MCF 10A (cell line): ENCODE measurements at regions of chr21 and their contacts with region 1.

Region 1: GRCh38 chr21:17688912-17689874 is 76.5 kb upstream of the BTG3 start:
- DNase-seq: peak; percentile 95
- H3K4me3 Mint-ChIP-seq: peak overlapping the region; percentile 64
- H3K27ac Mint-ChIP-seq: peak overlapping the region; percentile 97
- H3K4me1 Mint-ChIP-seq: peaks cover 30% of the 10 kb centered on the region
- H3K27me3 Mint-ChIP-seq: no peaks in the 10 kb centered on the region
- CTCF ChIP-seq: peak; percentile 33

Region 2: DNA sequence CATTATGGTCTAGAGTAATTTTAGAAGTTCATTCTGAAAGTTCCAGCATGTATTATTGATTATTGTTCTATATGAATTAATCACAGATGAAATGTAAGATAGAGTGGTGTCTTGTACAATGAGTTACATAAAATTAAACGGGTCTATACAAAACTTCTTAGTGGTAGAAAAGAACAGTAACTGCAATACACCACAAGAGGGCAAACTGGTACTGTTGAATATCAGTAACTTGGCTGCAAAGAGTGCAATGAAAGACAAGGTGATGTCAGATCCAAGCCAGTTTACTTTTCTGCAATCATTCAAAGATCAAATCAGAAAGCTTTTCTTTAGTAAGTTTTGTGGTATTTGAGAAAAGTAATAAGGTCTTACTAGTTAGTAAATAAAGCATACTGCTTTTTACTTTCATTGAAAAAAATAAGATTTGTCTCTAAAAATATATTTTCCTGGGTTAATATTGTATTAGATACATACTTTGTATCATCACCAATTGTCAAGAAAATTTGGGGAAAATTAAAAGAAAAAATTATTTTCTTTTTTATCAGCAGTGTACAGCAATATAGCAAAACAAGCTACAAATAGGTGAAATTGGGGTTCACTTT is 10.1 kb before region 1 on chr21:
- CTCF ChIA-PET with region 1: interaction called, 39 read pairs
- POLR2A ChIA-PET with region 1: interaction called, 6 read pairs
- intact Hi-C with region 1: no loop called
- DNase-seq: peak; percentile 73
- H3K4me3 Mint-ChIP-seq: no peak overlapping the region
- H3K27ac Mint-ChIP-seq: no peak overlapping the region
- H3K4me1 Mint-ChIP-seq: no peaks in the 10 kb centered on the region
- H3K27me3 Mint-ChIP-seq: no peaks in the 10 kb centered on the region
- CTCF ChIP-seq: peak; percentile 80

Region 3: GRCh38 chr21:17708522-17709265 is 19.5 kb after region 1 on chr21:
- CTCF ChIA-PET with region 1: interaction called, 31 read pairs
- POLR2A ChIA-PET with region 1: interaction called, 90 read pairs
- intact Hi-C with region 1: no loop called
- DNase-seq: no peak
- H3K4me3 Mint-ChIP-seq: no peak overlapping the region
- H3K27ac Mint-ChIP-seq: peak overlapping the region; percentile 99
- H3K4me1 Mint-ChIP-seq: peaks cover 35% of the 10 kb centered on the region
- H3K27me3 Mint-ChIP-seq: no peaks in the 10 kb centered on the region
- CTCF ChIP-seq: no peak

Region 4: GRCh38 chr21:17741806-17742550 is 52.8 kb after region 1 on chr21:
- CTCF ChIA-PET with region 1: no interaction called
- POLR2A ChIA-PET with region 1: no interaction called
- intact Hi-C with region 1: no loop called
- DNase-seq: no peak
- H3K4me3 Mint-ChIP-seq: no peak overlapping the region
- H3K27ac Mint-ChIP-seq: no peak overlapping the region
- H3K4me1 Mint-ChIP-seq: no peaks in the 10 kb centered on the region
- H3K27me3 Mint-ChIP-seq: no peaks in the 10 kb centered on the region
- CTCF ChIP-seq: no peak

Region 5: DNA sequence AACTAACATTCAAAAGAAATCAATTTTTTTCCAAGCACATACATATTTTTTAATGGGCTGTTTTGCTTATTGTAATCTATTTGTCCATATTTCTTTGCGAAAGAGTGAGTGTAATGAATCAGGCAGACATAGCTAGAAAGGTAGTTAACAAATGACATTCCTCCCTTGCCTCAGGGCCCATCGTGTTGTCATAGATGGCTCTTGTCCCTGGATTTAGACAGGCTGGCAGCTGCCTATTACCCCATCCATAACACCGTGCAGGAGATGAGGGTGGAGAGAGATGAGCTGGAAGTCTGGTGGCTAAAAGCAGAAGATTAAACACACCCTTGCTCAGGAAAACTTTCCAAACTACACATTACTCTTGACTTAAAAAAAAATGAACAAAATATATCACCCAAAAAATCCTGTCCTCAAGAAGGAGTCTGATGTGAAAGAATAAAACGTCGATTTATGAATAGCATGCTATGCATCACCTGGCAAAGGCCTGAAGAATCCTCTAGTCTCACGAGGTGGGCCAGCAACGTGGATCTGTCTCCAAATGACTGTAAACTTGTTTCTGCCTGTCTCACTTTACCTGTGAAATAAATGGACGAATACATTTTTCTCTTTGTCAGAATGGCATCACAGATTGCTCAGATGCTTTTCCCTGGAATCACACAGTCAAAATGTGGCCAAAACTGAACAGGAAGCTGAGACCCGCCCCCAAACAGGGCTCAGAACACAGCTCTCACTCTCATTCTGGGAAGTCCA is 74.3 kb after region 1 on chr21:
- CTCF ChIA-PET with region 1: interaction called, 3 read pairs
- POLR2A ChIA-PET with region 1: interaction called, 30 read pairs
- intact Hi-C with region 1: no loop called
- DNase-seq: peak; percentile 54
- H3K4me3 Mint-ChIP-seq: no peak overlapping the region
- H3K27ac Mint-ChIP-seq: peak overlapping the region; percentile 64
- H3K4me1 Mint-ChIP-seq: peaks cover 22% of the 10 kb centered on the region
- H3K27me3 Mint-ChIP-seq: no peaks in the 10 kb centered on the region
- CTCF ChIP-seq: no peak

Region 6: GRCh38 chr21:17819114-17819876 is 130.1 kb after region 1 on chr21 and contains the start of gene C21orf91:
- CTCF ChIA-PET with region 1: interaction called, 15 read pairs
- POLR2A ChIA-PET with region 1: interaction called, 106 read pairs
- intact Hi-C with region 1: loop called (anchors 1 kb)
- DNase-seq: peak; percentile 80
- H3K4me3 Mint-ChIP-seq: peak within 1 kb of the TSS; percentile 82
- H3K27ac Mint-ChIP-seq: peak within 1 kb of the TSS; percentile 100
- H3K4me1 Mint-ChIP-seq: peaks cover 6% of the 10 kb centered on the region
- H3K27me3 Mint-ChIP-seq: no peaks in the 10 kb centered on the region
- CTCF ChIP-seq: no peak
- total RNA-seq, gene C21orf91: 21.0 and 22.1 TPM in 2 replicates

Region 7: DNA sequence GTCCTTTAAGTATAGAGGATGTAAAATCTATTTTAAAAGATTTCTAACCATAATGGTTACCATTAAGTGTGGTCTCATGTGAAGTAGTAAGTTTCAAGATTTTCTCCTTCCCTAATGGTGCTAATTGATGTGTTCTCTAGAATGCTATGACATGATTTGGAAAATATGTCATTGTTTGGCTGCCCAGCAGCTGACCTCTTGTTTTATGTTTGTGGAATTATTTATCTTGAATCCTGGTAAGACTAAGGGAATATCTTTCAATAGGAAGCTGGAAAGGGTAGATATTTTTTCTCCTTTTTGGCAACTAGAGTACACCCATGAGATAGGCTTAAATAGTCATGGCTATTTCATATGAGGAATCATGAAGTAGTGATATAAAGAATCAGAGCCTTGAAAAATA is 415.6 kb after region 1 on chr21:
- CTCF ChIA-PET with region 1: no interaction called
- POLR2A ChIA-PET with region 1: no interaction called
- intact Hi-C with region 1: no loop called
- DNase-seq: no peak
- H3K4me3 Mint-ChIP-seq: no peak overlapping the region
- H3K27ac Mint-ChIP-seq: no peak overlapping the region
- H3K4me1 Mint-ChIP-seq: no peaks in the 10 kb centered on the region
- H3K27me3 Mint-ChIP-seq: no peaks in the 10 kb centered on the region
- CTCF ChIP-seq: no peak